Activated CD4-positive, alpha-beta memory T cell treated with anti-CD3 and anti-CD28 coated beads for 36 hours (primary cell): ENCODE measurements at regions of chr15 and their contacts with region 1.

Region 1: GRCh38 chr15:78108299-78109084 is 16.1 kb downstream of the SH2D7 start:
- DNase-seq: peak; percentile 88
- H3K4me3 Mint-ChIP-seq: no peak overlapping the region
- H3K27ac Mint-ChIP-seq: no peak overlapping the region
- H3K4me1 Mint-ChIP-seq: peaks cover 31% of the 10 kb centered on the region
- H3K27me3 Mint-ChIP-seq: no peaks in the 10 kb centered on the region

Region 2: GRCh38 chr15:78000091-78000926 is 108.2 kb before region 1 on chr15:
- CTCF ChIA-PET with region 1: interaction called, 141 read pairs
- POLR2A ChIA-PET with region 1: no interaction called
- intact Hi-C with region 1: loop called (anchors 1 kb)
- DNase-seq: peak; percentile 87
- H3K4me3 Mint-ChIP-seq: no peak overlapping the region
- H3K27ac Mint-ChIP-seq: no peak overlapping the region
- H3K4me1 Mint-ChIP-seq: peaks cover 15% of the 10 kb centered on the region
- H3K27me3 Mint-ChIP-seq: no peaks in the 10 kb centered on the region

Region 3: GRCh38 chr15:78034495-78035191 is 73.8 kb before region 1 on chr15:
- CTCF ChIA-PET with region 1: interaction called, 36 read pairs
- POLR2A ChIA-PET with region 1: no interaction called
- intact Hi-C with region 1: no loop called
- DNase-seq: peak; percentile 94
- H3K4me3 Mint-ChIP-seq: peak overlapping the region; percentile 43
- H3K27ac Mint-ChIP-seq: peak overlapping the region; percentile 73
- H3K4me1 Mint-ChIP-seq: peaks cover 85% of the 10 kb centered on the region
- H3K27me3 Mint-ChIP-seq: no peaks in the 10 kb centered on the region

Region 4: GRCh38 chr15:78067328-78068228 is 40.9 kb before region 1 on chr15:
- CTCF ChIA-PET with region 1: interaction called, 18 read pairs
- POLR2A ChIA-PET with region 1: interaction called, 3 read pairs
- intact Hi-C with region 1: loop called (anchors 2 kb)
- DNase-seq: no peak
- H3K4me3 Mint-ChIP-seq: no peak overlapping the region
- H3K27ac Mint-ChIP-seq: no peak overlapping the region
- H3K4me1 Mint-ChIP-seq: peaks cover 16% of the 10 kb centered on the region
- H3K27me3 Mint-ChIP-seq: no peaks in the 10 kb centered on the region

Region 5: GRCh38 chr15:78131295-78132061 is 23.0 kb after region 1 on chr15 and contains the start of gene CIB2:
- CTCF ChIA-PET with region 1: interaction called, 15 read pairs
- POLR2A ChIA-PET with region 1: no interaction called
- intact Hi-C with region 1: no loop called
- DNase-seq: peak; percentile 83
- H3K4me3 Mint-ChIP-seq: peak within 1 kb of the TSS; percentile 73
- H3K27ac Mint-ChIP-seq: peak within 1 kb of the TSS; percentile 11
- H3K4me1 Mint-ChIP-seq: peaks cover 21% of the 10 kb centered on the region
- H3K27me3 Mint-ChIP-seq: no peaks in the 10 kb centered on the region
- total RNA-seq, gene CIB2: 2.0 to 2.2 TPM

Region 6: GRCh38 chr15:78422571-78423340 is 314.3 kb after region 1 on chr15:
- CTCF ChIA-PET with region 1: interaction called, 3 read pairs
- POLR2A ChIA-PET with region 1: no interaction called
- intact Hi-C with region 1: loop called (anchors 1 kb)
- DNase-seq: peak; percentile 76
- H3K4me3 Mint-ChIP-seq: no peak overlapping the region
- H3K27ac Mint-ChIP-seq: no peak overlapping the region
- H3K4me1 Mint-ChIP-seq: peaks cover 17% of the 10 kb centered on the region
- H3K27me3 Mint-ChIP-seq: peaks cover 4% of the 10 kb centered on the region